ENCODE measurements at regions of chr15 and their contacts with region 1.

Region 1: GRCh38 chr15:51162865-51163762 is 68.4 kb upstream of the TNFAIP8L3 start:
- DNase-seq: peak; percentile 71
- H3K4me3 Mint-ChIP-seq: no peak overlapping the region
- H3K27ac Mint-ChIP-seq: no peak overlapping the region
- H3K4me1 Mint-ChIP-seq: no peaks in the 10 kb centered on the region
- H3K27me3 Mint-ChIP-seq: peaks cover 20% of the 10 kb centered on the region

Region 2: GRCh38 chr15:51185213-51186159 is 22.4 kb after region 1 on chr15:
- CTCF ChIA-PET with region 1: interaction called, 11 read pairs
- DNase-seq: no peak
- H3K4me3 Mint-ChIP-seq: no peak overlapping the region
- H3K27ac Mint-ChIP-seq: no peak overlapping the region
- H3K4me1 Mint-ChIP-seq: no peaks in the 10 kb centered on the region
- H3K27me3 Mint-ChIP-seq: peaks cover 19% of the 10 kb centered on the region

Region 3: GRCh38 chr15:51192521-51193280 is 29.6 kb after region 1 on chr15:
- CTCF ChIA-PET with region 1: interaction called, 64 read pairs
- DNase-seq: peak; percentile 85
- H3K4me3 Mint-ChIP-seq: no peak overlapping the region
- H3K27ac Mint-ChIP-seq: no peak overlapping the region
- H3K4me1 Mint-ChIP-seq: no peaks in the 10 kb centered on the region
- H3K27me3 Mint-ChIP-seq: peaks cover 42% of the 10 kb centered on the region

Region 4: DNA sequence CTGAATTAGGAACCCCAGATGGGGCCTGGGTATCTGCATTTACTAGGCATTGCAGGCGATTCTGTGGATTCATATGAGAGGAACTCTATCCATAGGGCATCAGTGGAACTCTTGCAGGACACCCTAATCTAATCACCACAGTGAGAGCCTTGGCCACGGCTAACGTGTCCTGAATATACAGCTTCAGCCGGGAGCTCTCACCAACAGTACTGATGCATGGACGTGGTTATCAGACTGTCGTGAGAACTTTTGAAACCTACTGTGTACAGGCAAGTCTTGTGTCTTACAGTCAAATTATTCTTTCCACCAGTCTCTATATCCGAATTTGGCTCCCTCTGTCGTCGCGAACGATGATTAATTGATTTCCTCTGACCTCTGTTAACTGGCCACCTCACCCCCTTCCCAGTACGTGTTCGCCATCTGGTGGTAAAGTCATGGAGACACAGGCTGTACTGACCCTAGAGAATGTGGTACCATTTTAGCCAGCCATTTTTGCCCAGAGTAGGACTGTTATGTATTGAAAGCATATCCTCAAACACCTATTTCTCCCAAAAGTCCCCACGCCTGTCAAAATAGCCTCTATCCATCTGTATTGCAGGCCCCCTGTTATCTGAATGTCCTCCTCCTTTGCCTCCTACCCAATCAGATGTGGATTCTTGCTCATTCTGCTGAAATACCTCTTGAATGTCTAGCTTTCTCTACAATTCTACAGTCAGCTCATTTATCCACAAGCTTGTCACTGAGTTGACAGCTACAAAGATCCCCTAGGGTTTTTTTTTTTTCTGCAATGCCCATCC is 218.1 kb after region 1 on chr15:
- CTCF ChIA-PET with region 1: interaction called, 38 read pairs
- DNase-seq: peak; percentile 38
- H3K4me3 Mint-ChIP-seq: no peak overlapping the region
- H3K27ac Mint-ChIP-seq: no peak overlapping the region
- H3K4me1 Mint-ChIP-seq: no peaks in the 10 kb centered on the region
- H3K27me3 Mint-ChIP-seq: peaks cover 15% of the 10 kb centered on the region

Region 5: DNA sequence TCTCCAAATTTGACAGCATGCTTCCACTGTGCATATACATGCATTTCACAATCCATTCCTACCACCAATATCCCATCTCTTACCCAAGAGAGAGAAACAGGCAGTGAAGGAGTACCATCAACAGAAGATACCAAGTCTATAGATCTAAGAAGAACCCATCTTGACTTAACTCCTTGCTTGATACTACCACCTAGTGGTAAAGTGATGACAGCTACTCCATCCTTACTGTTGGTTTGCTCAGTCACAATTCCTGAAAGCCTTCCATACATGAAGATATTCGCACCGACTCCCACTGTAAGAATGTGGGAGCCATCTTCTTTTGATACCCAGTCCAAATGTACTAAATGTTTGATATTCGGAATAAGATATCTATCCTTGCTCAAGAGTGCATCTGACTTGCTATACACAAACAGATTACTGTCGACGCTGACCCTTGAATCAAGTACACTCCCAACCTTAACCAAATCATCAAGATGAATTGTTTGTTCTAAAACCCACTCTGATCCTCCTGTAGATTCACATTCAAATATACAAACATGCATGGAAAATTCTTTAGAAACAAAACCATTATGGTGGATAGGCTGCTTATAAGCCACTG is 336.4 kb after region 1 on chr15:
- CTCF ChIA-PET with region 1: interaction called, 10 read pairs
- DNase-seq: no peak
- H3K4me3 Mint-ChIP-seq: no peak overlapping the region
- H3K27ac Mint-ChIP-seq: no peak overlapping the region
- H3K4me1 Mint-ChIP-seq: peaks cover 3% of the 10 kb centered on the region
- H3K27me3 Mint-ChIP-seq: no peaks in the 10 kb centered on the region

Measured in activated naive CD4-positive, alpha-beta T cell treated with anti-CD3 and anti-CD28 coated beads, Interleukin-2, amount 10 ng/mL, durations not matched to agents 7 days and 5 days (primary cell).